Prostate gland (tissue), 2 donors: ENCODE measurements at regions of chrX and their contacts with region 1.

Region 1: GRCh38 chrX:73855546-73855945 is 292.5 kb downstream of the CHIC1 start:
- DNase-seq: peak; percentile 35
- H3K4me3 ChIP-seq: no peak overlapping the region
- H3K27ac ChIP-seq: no peak overlapping the region
- H3K4me1 ChIP-seq: no peaks in the 10 kb centered on the region
- H3K27me3 ChIP-seq: no peaks in the 10 kb centered on the region
- CTCF ChIP-seq: peak; percentile 34 to 70 (median 63)
- POLR2A ChIP-seq: no peak

Region 2: GRCh38 chrX:74015379-74016019 is 160.0 kb after region 1 on chrX:
- intact Hi-C with region 1: loop called (anchors 10 kb)
- DNase-seq: peak; percentile 11
- H3K4me3 ChIP-seq: no peak overlapping the region
- H3K27ac ChIP-seq: no peak overlapping the region
- H3K4me1 ChIP-seq: no peaks in the 10 kb centered on the region
- H3K27me3 ChIP-seq: no peaks in the 10 kb centered on the region
- CTCF ChIP-seq: peak in 3 of 4 experiments; percentile 52 to 64 (median 56)
- POLR2A ChIP-seq: no peak

Region 3: DNA sequence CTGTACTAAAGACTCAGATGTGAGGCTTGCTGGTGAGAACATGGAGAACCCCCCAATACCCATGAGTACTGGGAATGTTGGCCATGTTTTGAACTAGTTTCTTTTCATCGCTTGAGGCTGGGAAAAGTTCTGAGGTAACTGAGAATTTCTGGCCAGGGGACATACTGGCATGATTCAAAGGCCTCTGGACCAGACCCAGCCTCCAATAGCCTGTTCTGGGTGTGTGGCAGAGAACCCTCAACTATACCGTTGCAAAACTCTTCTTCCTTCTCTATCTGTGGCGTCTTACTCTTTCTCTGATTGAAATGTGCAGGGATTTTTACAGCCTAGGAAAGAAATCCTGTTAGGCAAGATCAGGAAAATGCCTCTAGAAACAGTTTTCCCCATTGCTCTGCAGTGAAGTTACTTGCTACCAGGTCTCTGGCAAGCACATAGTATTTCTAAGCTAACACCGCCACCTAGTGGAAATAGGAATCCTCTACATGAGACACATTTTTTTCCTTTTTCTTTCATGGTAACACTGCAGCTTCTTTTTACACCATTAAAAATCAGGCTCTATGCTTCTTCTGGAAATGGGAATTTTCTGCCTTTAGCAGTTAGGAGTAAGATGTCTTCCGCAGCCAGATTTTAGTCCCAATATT is 277.7 kb after region 1 on chrX:
- intact Hi-C with region 1: loop called (anchors 10 kb)
- DNase-seq: peak; percentile 25
- H3K4me3 ChIP-seq: no peak overlapping the region
- H3K27ac ChIP-seq: no peak overlapping the region
- H3K4me1 ChIP-seq: no peaks in the 10 kb centered on the region
- H3K27me3 ChIP-seq: no peaks in the 10 kb centered on the region
- CTCF ChIP-seq: peak in 3 of 4 experiments; percentile 64 to 68 (median 65)
- POLR2A ChIP-seq: no peak

Region 4: GRCh38 chrX:74550295-74550802 is 694.8 kb after region 1 on chrX:
- intact Hi-C with region 1: loop called (anchors 5 kb)
- DNase-seq: peak; percentile 64
- H3K4me3 ChIP-seq: no peak overlapping the region
- H3K27ac ChIP-seq: no peak overlapping the region
- H3K4me1 ChIP-seq: no peaks in the 10 kb centered on the region
- H3K27me3 ChIP-seq: no peaks in the 10 kb centered on the region
- CTCF ChIP-seq: peak; percentile 89 to 96 (median 93)
- POLR2A ChIP-seq: no peak